ENCODE measurements at regions of chr5 and their contacts with region 1.

Region 1: GRCh38 chr5:54421976-54422375 is 33.5 kb upstream of the HSPB3 start:
- H3K4me3 Mint-ChIP-seq: no peak overlapping the region
- H3K27ac Mint-ChIP-seq: no peak overlapping the region
- H3K4me1 Mint-ChIP-seq: no peaks in the 10 kb centered on the region
- H3K27me3 Mint-ChIP-seq: peaks cover 3% of the 10 kb centered on the region

Region 2: DNA sequence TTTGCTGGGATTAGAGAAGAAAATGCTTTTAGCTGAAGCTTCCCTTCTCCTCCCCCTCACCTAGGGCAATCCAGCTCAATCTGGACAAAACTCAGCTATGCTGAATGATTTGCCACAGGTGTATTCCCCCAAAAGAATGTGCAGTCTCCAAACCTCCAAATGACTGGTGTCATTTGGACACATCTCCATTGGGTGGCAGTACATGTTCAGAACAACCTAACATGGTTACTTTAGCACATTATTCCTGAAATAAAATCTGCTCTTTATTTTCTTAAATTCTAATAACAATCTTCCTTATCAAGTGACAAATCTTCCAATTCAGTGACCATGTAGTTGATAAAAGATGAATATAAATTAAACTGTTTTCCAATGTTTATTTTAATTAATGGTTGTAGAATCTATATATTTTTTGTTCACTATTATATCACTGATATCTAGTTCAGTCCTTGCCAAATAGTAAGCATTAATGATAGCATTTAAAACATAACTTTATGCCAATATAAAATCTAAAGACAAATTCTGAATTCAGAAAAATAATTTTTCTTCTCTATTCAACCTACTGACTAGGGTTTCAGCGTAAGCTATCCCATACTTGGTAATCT is 1251.1 kb before region 1 on chr5:
- intact Hi-C with region 1: loop called (anchors 10 kb)
- H3K4me3 Mint-ChIP-seq: no peak overlapping the region
- H3K27ac Mint-ChIP-seq: no peak overlapping the region
- H3K4me1 Mint-ChIP-seq: peaks cover 34% of the 10 kb centered on the region
- H3K27me3 Mint-ChIP-seq: no peaks in the 10 kb centered on the region

Region 3: GRCh38 chr5:54390015-54390414 is 32.0 kb before region 1 on chr5:
- intact Hi-C with region 1: no loop called
- H3K4me3 Mint-ChIP-seq: no peak overlapping the region
- H3K27ac Mint-ChIP-seq: no peak overlapping the region
- H3K4me1 Mint-ChIP-seq: no peaks in the 10 kb centered on the region
- H3K27me3 Mint-ChIP-seq: no peaks in the 10 kb centered on the region

Measured in dendritic cell treated with granulocyte-macrophage colony-stimulating factor and Interleukin-4, amounts not matched to agents 40 ng/mL and 50 ng/mL, for 4 days (primary cell).